CD4-positive, alpha-beta T cell (primary cell): ENCODE measurements at regions of chr6 and their contacts with region 1.

Region 1: DNA sequence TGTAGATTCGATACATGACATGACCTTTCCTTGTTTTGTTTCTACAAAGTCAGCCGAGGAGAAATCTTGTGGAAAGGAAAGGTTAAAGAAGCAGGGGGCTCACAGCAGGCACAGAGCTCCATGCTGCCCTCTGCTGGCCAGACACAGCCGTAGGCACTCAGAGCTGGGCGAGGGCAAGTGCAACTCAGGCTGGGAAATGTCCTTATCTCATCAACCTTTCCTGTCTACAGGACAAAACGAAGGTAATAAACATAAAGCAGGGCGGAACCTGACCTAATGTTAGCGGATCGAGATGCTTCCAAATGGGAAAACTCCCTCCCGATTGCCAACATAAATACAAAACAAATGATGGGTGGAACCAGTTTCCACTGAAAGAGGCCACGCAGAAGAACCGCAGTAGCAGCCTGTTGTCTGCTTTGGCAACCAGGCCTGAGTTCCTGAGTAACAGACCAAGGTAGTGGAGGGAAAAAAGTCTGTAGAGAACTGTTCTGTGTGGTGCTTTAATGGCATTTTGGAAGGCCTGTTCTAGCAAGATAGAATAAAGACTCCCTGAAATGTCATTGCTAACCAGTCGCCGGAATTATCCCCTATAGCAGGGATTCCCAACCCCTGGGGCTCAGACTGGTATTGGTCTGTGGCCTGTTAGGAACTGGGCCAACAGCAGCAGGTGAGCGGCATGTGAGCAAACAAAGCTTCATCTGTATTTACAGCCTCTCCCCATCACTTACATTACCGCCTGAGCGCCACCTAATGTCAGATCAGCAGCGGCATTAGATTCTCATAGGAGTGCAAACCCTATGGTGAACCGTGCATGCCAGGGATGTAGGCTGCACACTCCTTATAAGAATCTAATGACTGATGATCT is 85.2 kb downstream of the MBOAT1 start:
- DNase-seq: peak; percentile 13 to 73 (median 50)
- ATAC-seq: peak; percentile 65
- H3K4me3 ChIP-seq: no peak overlapping the region
- H3K4me3 Mint-ChIP-seq: no peak overlapping the region
- H3K27ac ChIP-seq: no peak overlapping the region
- H3K27ac Mint-ChIP-seq: no peak overlapping the region
- H3K4me1 ChIP-seq: peaks cover 4% of the 10 kb centered on the region
- H3K4me1 Mint-ChIP-seq: peaks cover 10% of the 10 kb centered on the region
- H3K27me3 ChIP-seq: no peaks in the 10 kb centered on the region
- H3K27me3 Mint-ChIP-seq: no peaks in the 10 kb centered on the region
- CTCF ChIP-seq: peak; percentile 90

Region 2: DNA sequence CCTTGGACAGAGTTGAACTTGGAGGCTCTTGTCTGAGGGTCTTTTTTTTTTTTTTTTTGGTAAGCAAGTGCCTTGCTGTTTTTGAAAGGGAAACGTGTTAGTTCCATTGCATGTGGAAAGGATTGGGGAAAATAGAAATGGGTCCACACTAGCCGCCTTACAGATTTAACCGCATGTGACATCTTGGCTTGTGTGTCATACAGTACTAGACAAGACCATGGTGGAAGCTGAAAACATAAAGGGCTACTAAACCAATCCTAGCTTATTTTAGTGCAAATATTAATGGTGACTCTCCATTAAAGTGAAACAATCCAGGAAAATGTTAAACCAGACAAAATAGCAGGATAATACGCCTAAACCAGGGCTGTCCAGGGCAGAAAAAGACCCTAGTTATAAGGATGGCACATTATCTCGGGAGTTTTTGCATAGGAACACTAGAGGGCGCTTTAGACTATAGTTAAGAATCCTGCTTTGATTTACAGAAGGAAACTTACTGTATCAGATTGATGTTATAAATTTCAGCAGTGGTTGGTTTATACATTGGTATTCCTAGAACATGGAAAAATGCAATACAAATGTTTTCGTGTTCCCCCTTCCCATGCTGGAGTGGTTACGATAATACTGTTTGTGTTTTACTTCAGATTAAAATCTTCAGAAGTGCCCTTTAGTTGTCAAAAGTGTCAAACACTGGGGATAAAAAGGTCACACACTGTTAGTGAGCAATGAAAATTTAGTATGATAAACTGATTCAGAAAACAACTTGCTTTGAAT is 1802.9 kb before region 1 on chr6:
- CTCF ChIA-PET with region 1: interaction called, 3 read pairs
- POLR2A ChIA-PET with region 1: no interaction called
- intact Hi-C with region 1: loop called in 1 of 2 experiments (anchors 5 kb)
- DNase-seq: peak in 4 of 14 experiments; percentile 26 to 62 (median 52)
- ATAC-seq: no peak
- H3K4me3 ChIP-seq: no peak overlapping the region
- H3K4me3 Mint-ChIP-seq: no peak overlapping the region
- H3K27ac ChIP-seq: no peak overlapping the region
- H3K27ac Mint-ChIP-seq: no peak overlapping the region
- H3K4me1 ChIP-seq: no peaks in the 10 kb centered on the region
- H3K4me1 Mint-ChIP-seq: no peaks in the 10 kb centered on the region
- H3K27me3 ChIP-seq: no peaks in the 10 kb centered on the region
- H3K27me3 Mint-ChIP-seq: peaks cover 15% of the 10 kb centered on the region
- CTCF ChIP-seq: peak; percentile 96

Region 3: DNA sequence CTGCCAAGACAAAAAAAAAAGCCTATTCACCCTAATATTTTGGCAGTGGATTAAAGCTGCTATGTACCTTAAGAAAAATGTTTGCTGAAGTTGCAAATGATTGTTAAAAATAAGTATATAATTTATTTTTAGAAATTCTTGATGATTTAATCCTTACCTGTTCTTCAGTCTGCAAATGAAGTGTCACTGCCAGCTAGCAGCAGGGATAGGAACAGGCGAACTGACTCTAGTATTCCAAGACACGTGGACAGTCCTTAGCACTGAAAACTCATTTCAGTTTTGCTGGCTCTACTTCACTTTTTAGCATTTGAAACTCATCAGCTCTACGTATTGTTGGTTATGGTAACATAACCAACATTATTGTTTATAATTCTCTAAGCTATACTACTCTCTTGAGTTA is 494.2 kb before region 1 on chr6:
- CTCF ChIA-PET with region 1: no interaction called
- POLR2A ChIA-PET with region 1: no interaction called
- intact Hi-C with region 1: no loop called
- DNase-seq: no peak
- ATAC-seq: no peak
- H3K4me3 ChIP-seq: no peak overlapping the region
- H3K4me3 Mint-ChIP-seq: no peak overlapping the region
- H3K27ac ChIP-seq: no peak overlapping the region
- H3K27ac Mint-ChIP-seq: no peak overlapping the region
- H3K4me1 ChIP-seq: no peaks in the 10 kb centered on the region
- H3K4me1 Mint-ChIP-seq: no peaks in the 10 kb centered on the region
- H3K27me3 ChIP-seq: no peaks in the 10 kb centered on the region
- H3K27me3 Mint-ChIP-seq: no peaks in the 10 kb centered on the region
- CTCF ChIP-seq: no peak

Region 4: DNA sequence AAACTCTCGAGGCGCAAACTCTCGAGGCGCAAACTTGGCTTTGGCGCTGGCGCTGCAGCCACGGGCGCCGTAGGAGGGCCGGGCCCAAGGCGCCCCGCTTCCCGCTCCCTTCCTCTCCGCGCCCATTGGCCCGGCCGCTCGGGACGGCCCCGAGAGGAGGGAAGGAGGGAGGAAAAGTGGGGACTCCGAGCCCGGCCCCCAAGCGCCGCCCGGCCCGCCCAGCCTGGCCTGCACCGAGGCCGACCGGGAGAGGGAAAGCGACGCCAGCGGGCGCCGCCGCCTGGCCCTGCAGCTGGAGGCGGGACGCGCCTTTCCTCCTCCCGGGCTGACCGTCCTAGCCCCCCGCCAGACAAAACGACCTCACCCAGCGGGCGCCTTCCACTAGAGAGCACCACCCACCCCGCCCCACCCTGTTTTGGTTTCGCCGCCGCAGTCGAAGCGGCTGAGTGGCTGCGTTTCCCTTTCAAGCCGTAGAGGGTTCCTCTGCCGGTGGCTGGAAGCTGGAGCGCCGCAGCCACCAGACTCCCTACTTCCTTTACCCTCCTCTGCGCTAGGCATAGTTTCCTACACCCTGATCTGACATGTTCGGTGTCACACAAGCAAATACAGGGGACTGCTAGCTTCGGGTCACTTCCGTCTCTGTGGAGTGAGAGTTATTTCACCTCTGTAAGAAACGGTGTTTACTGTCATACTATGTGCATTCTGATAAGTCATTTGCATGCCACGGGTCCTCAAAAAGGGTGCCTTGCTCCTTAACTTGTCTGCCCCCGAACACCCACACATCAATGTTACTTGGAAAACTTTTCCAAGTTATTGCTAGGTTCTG is 85.6 kb after region 1 on chr6 and contains the start of gene MBOAT1:
- CTCF ChIA-PET with region 1: no interaction called
- POLR2A ChIA-PET with region 1: interaction called, 8 read pairs
- intact Hi-C with region 1: loop called in 1 of 2 experiments (anchors 5 kb)
- DNase-seq: peak; percentile 27 to 86 (median 56)
- ATAC-seq: peak; percentile 78
- H3K4me3 ChIP-seq: peak within 1 kb of the TSS; percentile 83
- H3K4me3 Mint-ChIP-seq: peak within 1 kb of the TSS; percentile 99
- H3K27ac ChIP-seq: peak within 1 kb of the TSS; percentile 61 to 78
- H3K27ac Mint-ChIP-seq: peak within 1 kb of the TSS; percentile 97
- H3K4me1 ChIP-seq: peaks cover 28% of the 10 kb centered on the region
- H3K4me1 Mint-ChIP-seq: peaks cover 48% of the 10 kb centered on the region
- H3K27me3 ChIP-seq: no peaks in the 10 kb centered on the region
- H3K27me3 Mint-ChIP-seq: no peaks in the 10 kb centered on the region
- CTCF ChIP-seq: no peak
- total RNA-seq, gene MBOAT1: 17.2 to 18.5 TPM